ENCODE measurements at regions of chr3 and their contacts with region 1.

Region 1: GRCh38 chr3:48088749-48089466 is 72.7 kb upstream of the MAP4 start:
- DNase-seq: peak; percentile 95
- H3K4me3 Mint-ChIP-seq: peak overlapping the region; percentile 96
- H3K27ac Mint-ChIP-seq: peak overlapping the region; percentile 96
- H3K4me1 Mint-ChIP-seq: peaks cover 32% of the 10 kb centered on the region
- H3K27me3 Mint-ChIP-seq: peaks cover 9% of the 10 kb centered on the region

Region 2: DNA sequence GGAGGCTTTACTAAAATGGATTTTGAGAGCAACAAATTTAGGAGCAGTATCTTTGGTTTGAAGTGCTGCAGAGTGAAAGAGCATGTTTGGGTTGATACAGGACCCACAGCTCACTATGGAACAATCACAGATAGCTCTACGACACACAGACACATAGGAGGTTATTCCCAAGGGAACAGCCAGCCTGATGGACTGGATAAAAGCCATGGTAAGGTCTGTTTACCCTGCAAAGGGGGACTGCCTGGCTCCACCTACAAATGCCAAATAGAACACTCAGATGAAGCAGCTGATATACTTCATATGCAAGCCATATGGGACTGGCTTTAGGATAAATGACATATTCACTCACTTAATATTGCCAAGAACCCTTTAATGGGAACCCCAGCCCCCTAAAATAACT is 23.9 kb after region 1 on chr3:
- CTCF ChIA-PET with region 1: interaction called, 5 read pairs
- POLR2A ChIA-PET with region 1: interaction called, 23 read pairs
- DNase-seq: no peak
- H3K4me3 Mint-ChIP-seq: peak overlapping the region; percentile 1
- H3K27ac Mint-ChIP-seq: peak overlapping the region; percentile 65
- H3K4me1 Mint-ChIP-seq: peaks cover 12% of the 10 kb centered on the region
- H3K27me3 Mint-ChIP-seq: no peaks in the 10 kb centered on the region

Region 3: DNA sequence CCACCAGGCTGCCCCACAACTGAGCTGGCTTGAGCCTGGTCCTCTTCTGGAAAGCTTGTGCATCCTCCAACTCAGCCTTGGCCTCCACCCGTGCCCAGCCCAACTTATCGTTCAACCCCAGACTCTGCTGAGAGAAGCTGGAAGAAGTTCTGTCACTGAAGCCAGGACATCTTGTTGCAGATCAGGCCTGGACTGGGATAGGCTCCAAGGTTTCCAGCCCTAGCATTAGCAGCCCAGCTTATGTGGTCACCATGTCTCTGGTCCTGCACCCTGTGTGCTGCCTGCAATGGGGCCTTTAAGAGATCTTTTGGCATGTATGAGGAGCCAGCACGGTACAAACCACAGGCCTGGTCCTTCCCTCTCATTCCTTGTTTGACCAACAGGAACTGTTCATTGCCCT is 119.2 kb after region 1 on chr3:
- CTCF ChIA-PET with region 1: no interaction called
- POLR2A ChIA-PET with region 1: no interaction called
- DNase-seq: no peak
- H3K4me3 Mint-ChIP-seq: no peak overlapping the region
- H3K27ac Mint-ChIP-seq: no peak overlapping the region
- H3K4me1 Mint-ChIP-seq: no peaks in the 10 kb centered on the region
- H3K27me3 Mint-ChIP-seq: no peaks in the 10 kb centered on the region

Measured in activated CD4-positive, alpha-beta memory T cell treated with anti-CD3 and anti-CD28 coated beads, Interleukin-2, amount 10 ng/mL, durations not matched to agents 7 days and 5 days (primary cell).